GM12878 (cell line): ENCODE measurements at regions of chr3 and their contacts with region 1.

Region 1: DNA sequence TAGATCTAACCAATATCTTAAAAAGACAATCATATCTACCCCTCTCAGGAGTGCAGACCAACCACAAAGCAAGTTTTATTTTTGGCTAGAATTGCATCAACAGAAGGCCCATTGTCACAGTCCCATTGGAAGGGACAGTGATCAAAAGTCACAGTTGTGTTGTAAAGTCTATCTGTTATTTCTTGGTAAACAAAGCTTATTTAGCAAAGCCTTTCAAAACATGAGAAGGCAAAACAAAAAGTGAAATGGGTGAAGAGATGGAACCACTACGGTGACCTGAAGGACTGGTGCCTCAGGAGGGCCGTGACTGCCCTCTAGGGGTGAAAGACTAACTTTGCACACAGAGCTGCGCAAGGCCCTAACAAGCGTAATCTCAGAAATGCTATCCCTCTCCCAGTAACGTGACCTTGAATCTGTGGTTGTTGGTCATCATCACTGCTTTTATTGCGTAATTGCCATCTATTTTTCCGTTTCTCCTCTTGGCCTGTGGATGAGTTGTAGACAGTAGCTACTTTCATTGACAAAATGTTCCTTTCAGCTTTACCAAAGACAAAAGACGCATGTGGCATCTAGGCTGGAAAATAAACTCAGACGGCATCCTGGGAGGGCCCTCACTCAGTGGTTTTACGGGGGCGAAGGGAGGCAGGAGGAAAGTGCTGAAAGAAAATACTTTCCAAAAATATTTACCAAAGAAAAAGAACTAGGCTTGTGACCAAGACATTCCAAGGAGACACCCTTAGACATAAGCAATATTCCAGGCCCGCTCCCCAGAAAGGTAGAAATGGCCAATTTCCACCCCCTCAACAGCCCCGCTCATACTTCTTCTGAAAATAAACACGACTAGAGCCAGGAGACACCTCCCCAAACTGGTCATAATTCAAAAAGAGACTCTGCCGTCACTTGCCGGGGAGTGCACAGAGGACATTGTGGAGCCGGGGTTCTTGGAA is 79.4 kb downstream of the FRMD4B start:
- DNase-seq: no peak
- ATAC-seq: peak; percentile 98
- H3K4me3 ChIP-seq: no peak overlapping the region
- H3K27ac ChIP-seq: no peak overlapping the region
- H3K4me1 ChIP-seq: no peaks in the 10 kb centered on the region
- H3K27me3 ChIP-seq: no peaks in the 10 kb centered on the region
- CTCF ChIP-seq: peak; percentile 91 to 96 (median 94)
- EP300 ChIP-seq: no peak
- POLR2A ChIP-seq: no peak
- RAD21 ChIP-seq: peak; percentile 98

Region 2: DNA sequence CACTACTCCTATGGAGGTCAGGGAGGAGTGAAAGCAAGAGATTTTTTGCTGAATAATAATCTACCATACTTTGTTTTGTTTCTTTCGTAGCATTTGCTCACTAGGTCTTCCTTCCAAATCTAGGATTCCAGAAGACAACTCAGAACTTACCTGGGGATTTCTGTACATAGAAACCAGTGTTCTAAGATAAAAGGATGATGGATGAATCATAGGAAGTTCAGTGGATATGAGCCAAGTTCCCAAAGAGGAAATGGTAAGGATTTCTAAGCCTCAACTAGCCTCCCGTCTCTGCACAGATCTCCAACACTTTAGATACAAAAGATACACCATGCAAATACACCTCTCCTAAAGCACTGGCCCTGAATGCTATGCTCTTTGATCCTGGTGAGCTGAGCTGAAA is 658.0 kb before region 1 on chr3:
- CTCF ChIA-PET with region 1: no interaction called
- POLR2A ChIA-PET with region 1: no interaction called
- RAD21 ChIA-PET with region 1: no interaction called
- SMC1A ChIA-PET with region 1: no interaction called
- in situ Hi-C with region 1: no loop called
- intact Hi-C with region 1: no loop called
- DNase-seq: no peak
- ATAC-seq: no peak
- H3K4me3 ChIP-seq: no peak overlapping the region
- H3K27ac ChIP-seq: no peak overlapping the region
- H3K4me1 ChIP-seq: no peaks in the 10 kb centered on the region
- H3K27me3 ChIP-seq: no peaks in the 10 kb centered on the region
- CTCF ChIP-seq: no peak
- EP300 ChIP-seq: no peak
- POLR2A ChIP-seq: no peak
- RAD21 ChIP-seq: no peak

Region 3: GRCh38 chr3:69013253-69014021 is 293.1 kb before region 1 on chr3 and contains the start of gene EOGT:
- CTCF ChIA-PET with region 1: no interaction called
- POLR2A ChIA-PET with region 1: no interaction called
- RAD21 ChIA-PET with region 1: no interaction called
- SMC1A ChIA-PET with region 1: no interaction called
- in situ Hi-C with region 1: no loop called
- intact Hi-C with region 1: loop called (anchors 10 kb)
- DNase-seq: peak; percentile 15
- ATAC-seq: peak; percentile 86
- H3K4me3 ChIP-seq: peak within 1 kb of the TSS; percentile 87
- H3K27ac ChIP-seq: peak within 1 kb of the TSS; percentile 64
- H3K4me1 ChIP-seq: peaks cover 7% of the 10 kb centered on the region; the same call in 1 of the 2 replicates
- H3K27me3 ChIP-seq: no peaks in the 10 kb centered on the region
- CTCF ChIP-seq: peak; percentile 43 to 80 (median 71)
- EP300 ChIP-seq: no peak
- POLR2A ChIP-seq: peak; percentile 82
- RAD21 ChIP-seq: 0 out of 2 replicates have a peak, but pooled peaks have one; percentile 9
- polyA plus RNA-seq, gene EOGT: 3.5 to 4.3 TPM

Region 4: DNA sequence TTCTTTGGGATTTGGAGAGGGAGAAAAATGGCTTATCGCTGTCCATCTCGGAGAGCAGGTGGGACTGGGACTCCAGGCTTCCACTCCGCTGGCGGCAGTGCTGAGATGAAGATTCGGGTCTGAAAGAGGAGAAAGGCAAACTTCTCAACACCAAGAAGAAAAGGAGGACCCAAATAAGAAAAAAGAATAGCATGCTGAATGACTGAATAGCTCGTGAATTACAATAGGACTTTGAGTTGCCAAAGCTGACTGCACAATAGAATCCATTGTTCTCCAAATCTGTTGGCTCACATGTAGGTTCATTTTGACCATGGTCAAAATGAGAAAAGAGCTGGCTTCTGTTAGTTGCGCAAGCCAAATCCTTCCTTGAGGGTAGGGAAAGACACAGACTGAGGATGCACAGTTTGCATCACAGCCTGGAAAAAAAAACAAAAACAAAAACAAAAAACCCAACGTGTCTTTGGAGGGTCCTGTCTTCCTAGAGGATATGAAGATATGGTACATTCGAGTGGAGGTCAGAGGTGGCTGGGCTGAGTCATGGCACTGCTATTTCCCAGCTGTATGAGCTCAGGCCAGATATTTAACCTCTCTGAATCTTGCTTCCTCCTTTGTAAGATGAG is 124.8 kb before region 1 on chr3:
- CTCF ChIA-PET with region 1: interaction called, 14 read pairs
- POLR2A ChIA-PET with region 1: no interaction called
- RAD21 ChIA-PET with region 1: interaction called, 6 read pairs
- SMC1A ChIA-PET with region 1: interaction called, 15 read pairs
- in situ Hi-C with region 1: no loop called
- intact Hi-C with region 1: no loop called
- DNase-seq: no peak
- ATAC-seq: no peak
- H3K4me3 ChIP-seq: no peak overlapping the region
- H3K27ac ChIP-seq: no peak overlapping the region
- H3K4me1 ChIP-seq: no peaks in the 10 kb centered on the region
- H3K27me3 ChIP-seq: no peaks in the 10 kb centered on the region
- CTCF ChIP-seq: no peak
- EP300 ChIP-seq: no peak
- POLR2A ChIP-seq: no peak
- RAD21 ChIP-seq: no peak

Region 5: DNA sequence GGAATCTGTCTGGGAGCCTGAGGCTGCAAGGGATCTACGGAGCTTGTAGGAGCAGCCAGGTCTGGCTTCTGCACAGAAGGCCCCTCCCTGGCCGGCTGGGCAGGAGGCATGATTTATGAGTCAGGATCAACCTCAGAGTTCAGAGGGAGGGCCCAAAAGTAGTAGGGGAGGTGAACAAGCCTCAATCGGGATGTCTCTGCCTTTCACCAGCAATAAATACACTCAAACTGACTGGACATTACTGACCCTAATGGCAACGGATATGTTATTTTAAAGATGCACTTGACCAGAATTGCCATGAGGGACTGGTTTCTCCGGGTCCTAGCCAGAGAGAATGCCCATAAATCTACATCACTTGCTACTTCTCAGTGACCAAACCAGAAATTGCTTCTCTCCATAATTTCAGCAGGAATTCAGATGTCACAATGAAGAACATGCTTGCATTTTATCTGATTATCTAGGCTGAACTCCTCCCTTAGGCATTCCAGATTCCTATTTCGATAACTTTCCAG is 74.5 kb before region 1 on chr3:
- CTCF ChIA-PET with region 1: interaction called, 57 read pairs
- POLR2A ChIA-PET with region 1: no interaction called
- RAD21 ChIA-PET with region 1: interaction called, 53 read pairs
- SMC1A ChIA-PET with region 1: interaction called, 98 read pairs
- in situ Hi-C with region 1: no loop called
- intact Hi-C with region 1: no loop called
- DNase-seq: no peak
- ATAC-seq: no peak
- H3K4me3 ChIP-seq: no peak overlapping the region
- H3K27ac ChIP-seq: no peak overlapping the region
- H3K4me1 ChIP-seq: no peaks in the 10 kb centered on the region
- H3K27me3 ChIP-seq: no peaks in the 10 kb centered on the region
- CTCF ChIP-seq: no peak
- EP300 ChIP-seq: no peak
- POLR2A ChIP-seq: no peak
- RAD21 ChIP-seq: no peak

Region 6: GRCh38 chr3:69282181-69282580 is 24.3 kb before region 1 on chr3:
- CTCF ChIA-PET with region 1: interaction called, 16 read pairs
- POLR2A ChIA-PET with region 1: no interaction called
- RAD21 ChIA-PET with region 1: interaction called, 28 read pairs
- SMC1A ChIA-PET with region 1: interaction called, 18 read pairs
- in situ Hi-C with region 1: no loop called
- intact Hi-C with region 1: no loop called
- DNase-seq: no peak
- ATAC-seq: peak; percentile 96
- H3K4me3 ChIP-seq: no peak overlapping the region
- H3K27ac ChIP-seq: no peak overlapping the region
- H3K4me1 ChIP-seq: no peaks in the 10 kb centered on the region
- H3K27me3 ChIP-seq: no peaks in the 10 kb centered on the region
- CTCF ChIP-seq: no peak
- EP300 ChIP-seq: no peak; a peak in 1 of 4 replicates
- POLR2A ChIP-seq: no peak
- RAD21 ChIP-seq: no peak

Region 7: DNA sequence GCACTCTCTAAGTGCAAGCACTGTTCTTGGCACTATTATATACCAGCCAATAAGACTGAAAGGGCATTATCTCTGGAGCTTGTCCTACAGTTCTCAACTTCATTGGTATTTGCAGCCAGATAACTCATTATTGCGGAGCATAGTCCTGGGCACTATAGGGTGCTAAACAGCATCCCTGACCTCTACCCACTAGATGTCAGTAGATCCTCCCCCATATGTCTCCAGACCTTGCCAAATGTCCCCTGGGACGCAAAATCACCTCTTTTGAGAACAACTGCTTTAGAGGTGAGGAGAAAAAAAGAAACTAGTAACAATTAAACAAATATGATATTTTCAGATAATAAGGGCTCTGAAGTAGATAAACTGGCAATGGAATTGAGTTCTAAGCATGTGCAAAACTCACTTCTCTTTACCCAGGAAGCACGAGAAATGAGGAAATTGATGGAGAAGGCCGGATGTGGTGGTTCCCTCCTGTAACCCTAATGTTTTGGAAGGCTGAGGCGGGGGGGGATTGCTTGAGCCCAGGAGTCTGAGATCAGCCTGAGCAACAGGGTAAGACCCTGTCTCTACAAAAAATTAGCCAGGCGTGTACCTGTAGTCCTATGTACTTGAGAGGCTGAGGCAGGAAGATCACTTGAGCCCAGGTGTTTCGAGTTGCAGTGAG is 18.0 kb after region 1 on chr3:
- CTCF ChIA-PET with region 1: interaction called, 236 read pairs
- POLR2A ChIA-PET with region 1: interaction called, 4 read pairs
- RAD21 ChIA-PET with region 1: interaction called, 16 read pairs
- SMC1A ChIA-PET with region 1: interaction called, 67 read pairs
- in situ Hi-C with region 1: no loop called
- intact Hi-C with region 1: no loop called
- DNase-seq: no peak
- ATAC-seq: peak; percentile 70
- H3K4me3 ChIP-seq: no peak overlapping the region
- H3K27ac ChIP-seq: no peak overlapping the region
- H3K4me1 ChIP-seq: peaks cover 28% of the 10 kb centered on the region
- H3K27me3 ChIP-seq: no peaks in the 10 kb centered on the region
- CTCF ChIP-seq: peak; percentile 71 to 81 (median 77)
- EP300 ChIP-seq: 0 out of 4 replicates have a peak, but pooled peaks of 1 of the 2 experiments have one; percentile 15
- POLR2A ChIP-seq: no peak
- RAD21 ChIP-seq: peak; percentile 98

Region 8: DNA sequence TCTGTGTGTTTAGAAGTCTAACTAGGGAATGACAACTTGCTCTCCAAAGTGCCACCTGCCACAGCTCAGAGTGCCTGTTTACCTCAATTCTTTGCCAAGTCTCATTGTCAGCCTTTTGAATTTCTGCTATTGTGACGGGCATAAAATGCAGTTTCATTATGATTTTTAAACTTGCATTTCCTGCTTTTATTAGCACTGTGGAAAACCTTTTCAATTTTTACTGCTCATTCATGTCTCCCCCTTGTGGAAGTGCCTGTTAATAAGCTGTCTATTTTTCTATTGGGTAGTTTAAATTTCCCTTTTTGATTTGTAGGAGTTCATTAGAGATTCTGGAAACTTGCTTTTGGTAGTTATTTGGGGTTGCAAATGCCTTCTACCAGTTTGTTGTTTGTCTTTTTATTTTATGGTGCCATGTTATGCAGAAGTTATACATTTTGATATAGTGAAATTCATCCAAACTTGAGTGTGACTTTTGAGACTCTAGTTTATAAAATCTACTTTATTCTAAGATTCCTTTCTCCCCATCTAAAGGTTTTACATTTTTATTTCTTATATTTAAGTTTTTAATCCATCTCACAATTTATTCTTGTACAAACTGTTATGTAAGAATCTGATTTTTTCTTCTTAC is 133.2 kb after region 1 on chr3:
- CTCF ChIA-PET with region 1: interaction called, 21 read pairs
- POLR2A ChIA-PET with region 1: no interaction called
- RAD21 ChIA-PET with region 1: interaction called, 6 read pairs
- SMC1A ChIA-PET with region 1: interaction called, 12 read pairs
- in situ Hi-C with region 1: no loop called
- intact Hi-C with region 1: no loop called
- DNase-seq: peak; percentile 16
- ATAC-seq: peak; percentile 31
- H3K4me3 ChIP-seq: no peak overlapping the region
- H3K27ac ChIP-seq: no peak overlapping the region
- H3K4me1 ChIP-seq: 0 out of 2 replicates have a peak, but pooled peaks cover 2% of the 10 kb centered on the region
- H3K27me3 ChIP-seq: no peaks in the 10 kb centered on the region
- CTCF ChIP-seq: peak; percentile 50 to 64 (median 54)
- EP300 ChIP-seq: no peak
- POLR2A ChIP-seq: no peak
- RAD21 ChIP-seq: peak; percentile 53

Region 9: DNA sequence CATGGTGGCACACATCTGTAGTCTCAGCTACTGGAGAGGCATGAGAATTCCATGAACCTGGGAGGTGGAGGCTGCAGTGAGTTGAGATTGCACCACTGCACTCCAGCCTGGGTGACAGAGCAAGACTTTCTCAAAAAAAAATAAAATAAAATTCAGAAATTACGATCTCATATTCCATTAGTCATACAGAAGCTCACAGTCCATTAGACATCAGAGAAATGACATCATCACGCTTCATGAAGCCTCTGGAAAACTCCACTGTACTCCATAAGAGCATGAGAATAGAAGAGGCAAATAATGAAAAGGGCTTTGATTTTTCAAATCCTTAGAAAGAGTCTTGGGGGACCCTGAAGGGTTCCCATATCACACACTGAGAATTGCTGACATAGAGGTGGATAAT is 287.8 kb after region 1 on chr3:
- CTCF ChIA-PET with region 1: no interaction called
- POLR2A ChIA-PET with region 1: no interaction called
- RAD21 ChIA-PET with region 1: no interaction called
- SMC1A ChIA-PET with region 1: no interaction called
- in situ Hi-C with region 1: no loop called
- intact Hi-C with region 1: no loop called
- DNase-seq: no peak
- ATAC-seq: no peak
- H3K4me3 ChIP-seq: no peak overlapping the region
- H3K27ac ChIP-seq: no peak overlapping the region
- H3K4me1 ChIP-seq: no peaks in the 10 kb centered on the region
- H3K27me3 ChIP-seq: no peaks in the 10 kb centered on the region
- CTCF ChIP-seq: no peak
- EP300 ChIP-seq: no peak
- POLR2A ChIP-seq: no peak
- RAD21 ChIP-seq: no peak